Endothelial cell of umbilical vein (primary cell): ENCODE measurements at regions of chr4 and their contacts with region 1.

Region 1: GRCh38 chr4:113952452-113953029 is 26.9 kb downstream of the ARSJ start:
- DNase-seq: peak; percentile 78
- H3K4me3 ChIP-seq: no peak overlapping the region
- H3K27ac ChIP-seq: no peak overlapping the region
- H3K4me1 ChIP-seq: peaks cover 20% of the 10 kb centered on the region
- H3K27me3 ChIP-seq: no peaks in the 10 kb centered on the region
- CTCF ChIP-seq: peak; percentile 64 to 72
- POLR2A ChIP-seq: no peak

Region 2: DNA sequence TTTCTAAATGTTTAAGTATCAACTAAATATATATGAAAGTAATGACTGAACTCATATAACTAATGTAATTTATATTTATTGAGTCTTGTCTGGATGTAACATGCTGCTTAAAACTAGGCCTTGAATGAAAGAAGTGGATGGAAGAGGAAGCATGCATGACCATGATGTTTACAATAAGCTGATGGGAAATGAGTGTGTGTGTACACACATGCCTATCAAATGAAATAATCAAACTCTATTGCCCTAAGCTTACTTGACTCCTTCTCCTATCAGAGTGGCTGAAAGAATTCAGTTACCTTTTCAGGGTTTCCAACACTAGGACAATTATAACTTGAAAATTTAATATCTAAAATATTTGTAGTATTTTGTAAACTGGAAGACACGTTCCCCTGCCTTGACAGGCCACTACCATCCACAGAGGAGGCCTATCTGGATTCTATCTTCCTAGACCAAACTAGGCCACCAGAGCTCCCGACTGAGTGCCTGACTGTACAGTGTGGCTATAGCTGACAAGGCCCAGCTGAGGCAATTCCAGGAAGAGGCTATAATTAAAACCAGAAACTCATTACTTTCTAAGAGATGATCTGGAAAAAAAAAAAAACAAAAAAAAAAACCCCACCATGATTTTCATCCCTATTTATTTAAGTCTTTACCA is 19.3 kb after region 1 on chr4:
- CTCF ChIA-PET with region 1: interaction called, 10 read pairs
- POLR2A ChIA-PET with region 1: no interaction called
- dilution Hi-C with region 1: no loop called
- intact Hi-C with region 1: no loop called
- DNase-seq: peak; percentile 80
- H3K4me3 ChIP-seq: no peak overlapping the region
- H3K27ac ChIP-seq: peak overlapping the region; percentile 77
- H3K4me1 ChIP-seq: peaks cover 39% of the 10 kb centered on the region
- H3K27me3 ChIP-seq: no peaks in the 10 kb centered on the region
- CTCF ChIP-seq: no peak
- POLR2A ChIP-seq: no peak

Region 3: DNA sequence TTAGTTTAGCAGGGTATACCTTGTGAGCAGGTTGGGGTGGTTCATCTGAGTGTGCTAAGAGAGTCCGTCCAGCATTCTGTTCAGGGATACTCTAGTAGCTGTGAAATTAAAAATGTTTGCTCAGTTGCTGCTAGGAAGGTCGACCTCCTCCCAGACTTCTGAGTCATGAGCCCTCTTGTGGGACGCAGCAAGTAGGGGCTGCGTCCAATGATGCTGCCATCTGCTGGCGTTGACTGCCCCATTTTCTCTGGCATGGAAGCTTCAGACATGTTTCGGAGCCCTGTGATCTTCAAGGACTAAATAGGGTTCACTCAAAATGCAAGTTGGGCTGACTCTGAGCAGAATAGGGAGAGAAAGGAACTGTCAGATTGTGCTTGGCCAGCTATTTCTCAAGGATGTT is 227.9 kb after region 1 on chr4:
- CTCF ChIA-PET with region 1: interaction called, 18 read pairs
- POLR2A ChIA-PET with region 1: no interaction called
- dilution Hi-C with region 1: no loop called
- intact Hi-C with region 1: loop called (anchors 1 kb)
- DNase-seq: peak; percentile 87
- H3K4me3 ChIP-seq: no peak overlapping the region
- H3K27ac ChIP-seq: no peak overlapping the region
- H3K4me1 ChIP-seq: no peaks in the 10 kb centered on the region
- H3K27me3 ChIP-seq: no peaks in the 10 kb centered on the region
- CTCF ChIP-seq: peak; percentile 69 to 79
- POLR2A ChIP-seq: no peak

Region 4: DNA sequence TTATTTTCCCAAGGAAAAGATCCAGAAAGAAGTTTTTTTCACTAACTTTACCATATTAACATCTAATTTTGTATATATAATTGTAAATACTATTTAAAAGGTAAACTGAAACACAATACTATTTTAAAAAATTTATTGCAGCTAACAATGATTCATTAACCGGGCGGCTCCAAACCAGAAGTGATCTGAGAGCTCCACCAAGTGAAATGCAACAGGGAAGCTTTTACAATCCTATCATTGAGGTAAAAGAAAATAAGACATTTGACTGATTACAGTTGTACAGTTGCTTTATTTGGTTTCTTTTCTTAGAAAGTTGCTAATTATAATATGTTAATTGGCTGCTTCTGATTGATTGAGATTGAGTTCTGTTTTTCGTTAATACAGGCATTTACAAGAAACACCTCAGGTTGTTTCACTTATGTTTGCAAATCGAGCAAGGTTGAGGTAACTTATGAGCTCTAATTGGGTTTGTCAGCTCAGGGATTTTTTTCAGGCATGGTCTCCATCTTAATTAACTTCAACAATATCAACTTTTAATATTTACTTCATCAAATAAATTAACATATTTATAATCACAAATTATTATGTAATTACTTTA is 425.9 kb after region 1 on chr4:
- CTCF ChIA-PET with region 1: interaction called, 62 read pairs
- POLR2A ChIA-PET with region 1: no interaction called
- dilution Hi-C with region 1: no loop called
- intact Hi-C with region 1: loop called (anchors 1 kb)
- DNase-seq: peak; percentile 37
- H3K4me3 ChIP-seq: no peak overlapping the region
- H3K27ac ChIP-seq: no peak overlapping the region
- H3K4me1 ChIP-seq: no peaks in the 10 kb centered on the region
- H3K27me3 ChIP-seq: peaks cover 0 to 2% of the 10 kb centered on the region in 2 experiments
- CTCF ChIP-seq: peak in 1 of 2 donors; percentile 21
- POLR2A ChIP-seq: no peak

Region 5: DNA sequence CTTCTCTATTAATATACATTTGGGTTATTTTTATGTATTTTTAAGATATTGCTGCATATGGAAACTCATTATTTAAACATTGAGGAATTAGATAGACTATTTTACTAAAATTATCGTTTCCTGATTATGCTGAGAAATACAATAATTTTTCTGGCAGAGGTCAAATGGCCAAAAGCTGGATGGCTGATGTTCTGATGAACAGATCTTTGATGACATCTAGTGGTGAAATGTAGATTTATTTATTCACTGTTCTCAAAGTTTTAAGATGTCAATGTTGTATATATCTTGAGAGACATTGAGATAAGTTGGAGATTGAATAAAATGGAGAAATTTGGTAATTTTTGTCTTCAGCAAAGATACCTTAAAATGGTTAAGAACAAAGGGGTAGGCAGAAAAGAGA is 742.2 kb after region 1 on chr4:
- CTCF ChIA-PET with region 1: no interaction called
- POLR2A ChIA-PET with region 1: no interaction called
- dilution Hi-C with region 1: no loop called
- intact Hi-C with region 1: loop called (anchors 10 kb)
- DNase-seq: peak; percentile 58
- H3K4me3 ChIP-seq: no peak overlapping the region
- H3K27ac ChIP-seq: no peak overlapping the region
- H3K4me1 ChIP-seq: peaks cover 4% of the 10 kb centered on the region
- H3K27me3 ChIP-seq: peaks cover 0 to 1% of the 10 kb centered on the region in 2 experiments
- CTCF ChIP-seq: peak; percentile 16
- POLR2A ChIP-seq: no peak